ENCODE measurements at regions of chr3 and their contacts with region 1.

Region 1: GRCh38 chr3:122991236-122991985 is 36.2 kb downstream of the SEMA5B start:
- DNase-seq: no peak
- H3K4me3 ChIP-seq: no peak overlapping the region
- H3K27ac ChIP-seq: no peak overlapping the region
- H3K4me1 ChIP-seq: no peaks in the 10 kb centered on the region
- H3K27me3 ChIP-seq: peaks cover 76% of the 10 kb centered on the region
- CTCF ChIP-seq: no peak

Region 2: DNA sequence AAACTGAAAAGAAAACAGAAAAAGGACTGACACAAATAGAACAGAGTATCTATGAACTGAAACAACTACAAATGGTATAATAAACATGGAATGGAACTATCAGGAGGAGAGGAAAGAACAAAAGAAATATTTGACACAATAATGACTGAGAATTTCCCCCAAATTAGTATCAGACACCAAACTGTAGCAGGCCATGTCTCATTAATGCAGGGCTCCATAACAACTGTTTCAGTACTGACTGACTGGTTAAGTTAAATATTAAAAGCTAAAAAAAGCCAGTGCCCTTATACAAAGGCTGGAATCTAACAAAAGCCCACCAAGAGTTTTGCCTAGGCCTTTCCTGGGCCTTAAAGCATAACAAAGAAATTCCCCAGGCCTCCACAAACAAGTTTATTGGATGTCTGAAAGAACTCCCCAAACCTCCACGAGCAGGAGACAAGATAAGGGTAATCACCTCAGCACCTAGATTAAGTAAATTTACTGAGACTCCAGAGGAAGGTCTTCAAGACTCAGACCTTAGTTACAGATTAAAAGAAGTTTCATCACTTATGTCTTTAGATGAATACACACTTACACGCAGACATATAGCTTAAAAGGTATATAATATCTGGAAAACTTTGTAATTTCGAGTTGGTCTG is 522.4 kb before region 1 on chr3:
- CTCF ChIA-PET with region 1: no interaction called
- POLR2A ChIA-PET with region 1: interaction called, 25 read pairs
- intact Hi-C with region 1: no loop called
- DNase-seq: no peak
- H3K4me3 ChIP-seq: no peak overlapping the region
- H3K27ac ChIP-seq: 0 out of 2 replicates have a peak overlapping the region, but pooled peaks have one; percentile 4
- H3K4me1 ChIP-seq: no peaks in the 10 kb centered on the region
- H3K27me3 ChIP-seq: no peaks in the 10 kb centered on the region
- CTCF ChIP-seq: no peak

Measured in PC-9 (cell line).